Activated CD8-positive, alpha-beta T cell treated with anti-CD3 and anti-CD28 coated beads for 36 hours (primary cell): ENCODE measurements at regions of chr11 and their contacts with region 1.

Region 1: GRCh38 chr11:57493507-57494503 is 21.7 kb downstream of the SLC43A1 start:
- DNase-seq: peak; percentile 88
- ATAC-seq: peak; percentile 90
- H3K4me3 Mint-ChIP-seq: no peak overlapping the region
- H3K27ac Mint-ChIP-seq: peak overlapping the region; percentile 96
- H3K4me1 Mint-ChIP-seq: peaks cover 13% of the 10 kb centered on the region
- H3K27me3 Mint-ChIP-seq: no peaks in the 10 kb centered on the region
- CTCF ChIP-seq: peak; percentile 90

Region 2: GRCh38 chr11:57474017-57474802 is 19.6 kb before region 1 on chr11:
- CTCF ChIA-PET with region 1: interaction called, 141 read pairs
- POLR2A ChIA-PET with region 1: interaction called, 5 read pairs
- intact Hi-C with region 1: no loop called
- DNase-seq: peak; percentile 82
- ATAC-seq: peak; percentile 83
- H3K4me3 Mint-ChIP-seq: peak overlapping the region; percentile 40
- H3K27ac Mint-ChIP-seq: peak overlapping the region; percentile 77
- H3K4me1 Mint-ChIP-seq: peaks cover 28% of the 10 kb centered on the region
- H3K27me3 Mint-ChIP-seq: peaks cover 5% of the 10 kb centered on the region
- CTCF ChIP-seq: no peak

Region 3: GRCh38 chr11:57515332-57516060 is 21.7 kb after region 1 on chr11 and contains the start of gene SLC43A1:
- CTCF ChIA-PET with region 1: interaction called, 126 read pairs
- POLR2A ChIA-PET with region 1: interaction called, 17 read pairs
- intact Hi-C with region 1: no loop called
- DNase-seq: peak; percentile 48
- ATAC-seq: peak; percentile 29
- H3K4me3 Mint-ChIP-seq: peak within 1 kb of the TSS; percentile 94
- H3K27ac Mint-ChIP-seq: peak within 1 kb of the TSS; percentile 95
- H3K4me1 Mint-ChIP-seq: peaks cover 29% of the 10 kb centered on the region
- H3K27me3 Mint-ChIP-seq: no peaks in the 10 kb centered on the region
- CTCF ChIP-seq: no peak
- total RNA-seq, gene SLC43A1: 32.1 to 34.0 TPM

Region 4: GRCh38 chr11:57567515-57568329 is 73.9 kb after region 1 on chr11 and contains the start of gene UBE2L6:
- CTCF ChIA-PET with region 1: interaction called, 13 read pairs
- POLR2A ChIA-PET with region 1: no interaction called
- intact Hi-C with region 1: no loop called
- DNase-seq: peak; percentile 74
- ATAC-seq: peak; percentile 82
- H3K4me3 Mint-ChIP-seq: peak within 1 kb of the TSS; percentile 89
- H3K27ac Mint-ChIP-seq: peak within 1 kb of the TSS; percentile 98
- H3K4me1 Mint-ChIP-seq: peaks cover 35% of the 10 kb centered on the region
- H3K27me3 Mint-ChIP-seq: no peaks in the 10 kb centered on the region
- CTCF ChIP-seq: no peak
- total RNA-seq, gene UBE2L6: 148 to 159 TPM

Region 5: DNA sequence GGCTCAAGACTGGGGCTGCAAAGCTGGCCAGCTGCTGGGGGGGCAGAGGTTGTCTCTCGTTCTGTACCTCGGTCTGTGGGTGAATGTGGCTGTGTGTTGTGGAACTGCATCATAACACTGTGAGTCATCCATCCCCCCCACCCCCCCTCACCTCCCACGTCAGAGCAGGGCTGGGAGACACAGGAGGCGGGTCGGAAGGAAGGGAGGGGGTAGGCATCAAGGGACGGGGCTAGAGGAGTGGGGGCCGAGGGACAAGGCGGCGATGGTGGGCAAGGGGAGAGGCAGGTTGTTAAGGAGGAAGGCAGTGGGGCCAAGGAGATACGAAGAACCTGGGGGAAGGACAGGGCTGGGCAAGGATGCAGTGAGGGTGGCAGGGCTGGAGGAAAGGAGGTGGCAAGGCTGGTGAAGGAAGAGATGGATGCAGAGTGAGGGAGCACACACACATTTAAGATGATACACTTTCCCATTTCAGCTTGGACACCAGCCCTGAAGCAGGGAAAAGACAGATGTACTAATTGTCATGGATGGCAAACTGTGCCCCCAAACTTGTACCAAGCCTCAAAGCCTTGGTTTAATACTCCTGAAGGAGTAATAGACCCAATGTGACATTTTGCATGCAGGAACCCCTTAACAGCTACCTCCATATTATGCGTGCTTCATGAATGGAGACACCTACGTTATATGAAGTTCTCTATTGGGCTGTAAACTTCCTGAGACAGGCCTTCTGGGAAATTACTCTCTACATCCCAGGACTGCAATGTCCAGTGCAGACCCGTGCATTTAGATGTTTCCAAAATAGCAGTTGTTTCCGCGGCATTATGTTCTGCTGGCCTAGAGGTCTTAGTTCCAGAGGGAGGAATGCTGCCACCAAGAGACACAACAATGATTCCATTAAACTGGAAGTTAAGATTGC is 156.3 kb after region 1 on chr11 and contains the start of gene YPEL4:
- CTCF ChIA-PET with region 1: interaction called, 39 read pairs
- POLR2A ChIA-PET with region 1: no interaction called
- intact Hi-C with region 1: no loop called
- DNase-seq: peak; percentile 78
- ATAC-seq: peak; percentile 80
- H3K4me3 Mint-ChIP-seq: peak within 1 kb of the TSS; percentile 64
- H3K27ac Mint-ChIP-seq: peak within 1 kb of the TSS; percentile 67
- H3K4me1 Mint-ChIP-seq: peaks cover 43% of the 10 kb centered on the region
- H3K27me3 Mint-ChIP-seq: peaks cover 37% of the 10 kb centered on the region
- CTCF ChIP-seq: no peak
- total RNA-seq, gene YPEL4: 0.43 to 0.54 TPM